ENCODE measurements at regions of chr20 and their contacts with region 1.

Region 1: GRCh38 chr20:49610701-49611538 is 43.0 kb upstream of the PTGIS start:
- DNase-seq: peak; percentile 92 to 98
- ATAC-seq: peak; percentile 87 to 92
- H3K4me3 ChIP-seq: peak overlapping the region; percentile 52
- H3K27ac ChIP-seq: peak overlapping the region; percentile 85 to 88
- H3K4me1 ChIP-seq: peaks cover 27% of the 10 kb centered on the region
- CTCF ChIP-seq: peak; percentile 97
- EP300 ChIP-seq: no peak
- POLR2A ChIP-seq: peak; percentile 54
- RAD21 ChIP-seq: peak; percentile 97 to 100

Region 2: DNA sequence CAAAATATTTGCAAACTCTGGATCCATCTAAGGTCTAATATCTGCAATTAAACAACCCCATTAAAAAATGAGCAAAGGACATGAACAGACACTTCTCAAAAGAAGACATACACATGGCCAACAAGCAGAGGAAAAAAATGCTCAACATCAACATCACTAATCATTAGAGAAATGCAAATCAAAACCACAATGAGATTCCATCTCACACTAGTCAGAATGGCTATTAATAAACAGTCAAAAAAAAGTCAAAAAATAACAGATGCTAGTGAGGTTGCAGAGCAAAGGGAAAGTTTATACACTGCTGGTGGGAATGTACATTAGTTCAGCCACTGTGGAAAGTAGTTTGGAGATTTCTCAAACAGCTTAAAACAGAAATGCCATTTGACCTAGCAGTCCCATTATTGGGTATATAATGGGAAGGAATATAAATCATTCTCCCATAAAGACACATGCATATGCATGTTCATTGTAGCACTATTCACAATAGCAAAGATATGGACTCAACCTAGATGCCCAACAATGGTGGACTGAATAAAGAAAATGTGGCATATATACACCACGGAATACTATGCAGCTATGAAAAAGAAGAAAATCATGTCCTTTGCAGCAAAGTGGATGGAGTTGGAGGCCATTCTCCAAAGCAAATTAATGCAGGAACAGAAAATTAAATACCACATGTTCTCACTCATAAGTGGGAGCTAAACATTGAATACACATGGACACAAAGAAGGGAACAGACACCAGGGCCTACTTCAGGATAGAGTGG is 342.1 kb before region 1 on chr20:
- CTCF ChIA-PET with region 1: no interaction called
- POLR2A ChIA-PET with region 1: no interaction called
- DNase-seq: no peak
- ATAC-seq: no peak
- H3K4me3 ChIP-seq: no peak overlapping the region
- H3K27ac ChIP-seq: no peak overlapping the region
- H3K4me1 ChIP-seq: no peaks in the 10 kb centered on the region
- CTCF ChIP-seq: no peak
- EP300 ChIP-seq: no peak
- POLR2A ChIP-seq: no peak
- RAD21 ChIP-seq: no peak

Region 3: GRCh38 chr20:49338061-49338460 is 272.9 kb before region 1 on chr20:
- CTCF ChIA-PET with region 1: interaction called, 26 read pairs
- POLR2A ChIA-PET with region 1: no interaction called
- DNase-seq: no peak
- ATAC-seq: no peak
- H3K4me3 ChIP-seq: no peak overlapping the region
- H3K27ac ChIP-seq: no peak overlapping the region
- H3K4me1 ChIP-seq: peaks cover 9% of the 10 kb centered on the region
- CTCF ChIP-seq: no peak
- EP300 ChIP-seq: no peak
- POLR2A ChIP-seq: no peak
- RAD21 ChIP-seq: no peak

Region 4: DNA sequence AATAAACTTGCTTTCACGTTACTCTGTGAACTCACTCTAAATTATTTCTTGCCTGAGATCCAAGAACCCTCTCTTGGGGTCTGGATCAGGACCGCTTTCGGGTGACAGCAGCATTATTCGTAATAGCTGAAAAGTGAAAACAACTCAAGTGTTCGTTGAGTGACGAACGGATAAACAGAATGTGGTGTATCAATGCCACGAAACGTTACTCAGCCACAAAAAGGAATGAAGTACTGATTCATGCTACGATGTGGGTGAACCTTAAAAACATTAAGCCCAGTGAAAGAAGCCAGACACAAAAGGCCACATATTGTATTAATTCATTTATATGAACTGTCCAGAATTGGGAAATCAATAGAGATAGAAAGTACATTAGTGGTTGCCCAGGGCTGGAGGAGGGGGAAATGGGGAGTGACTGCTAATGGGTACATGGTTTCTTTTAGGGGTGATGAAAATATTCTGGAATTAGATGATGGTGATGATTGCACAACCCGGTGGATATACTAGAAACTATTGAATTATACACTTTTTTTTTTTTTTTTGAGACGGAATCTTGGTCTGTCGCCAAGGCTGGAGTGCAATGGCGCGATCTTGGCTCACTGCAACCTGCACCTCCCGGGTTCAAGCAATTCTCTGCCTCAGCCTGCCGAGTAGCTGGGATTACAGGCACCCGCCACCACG is 51.4 kb before region 1 on chr20:
- CTCF ChIA-PET with region 1: interaction called, 19 read pairs
- POLR2A ChIA-PET with region 1: no interaction called
- DNase-seq: no peak
- ATAC-seq: no peak
- H3K4me3 ChIP-seq: no peak overlapping the region
- H3K27ac ChIP-seq: no peak overlapping the region
- H3K4me1 ChIP-seq: peaks cover 19% of the 10 kb centered on the region
- CTCF ChIP-seq: no peak
- EP300 ChIP-seq: no peak
- POLR2A ChIP-seq: no peak
- RAD21 ChIP-seq: no peak

Region 5: GRCh38 chr20:49594143-49594930 is 16.6 kb before region 1 on chr20:
- CTCF ChIA-PET with region 1: interaction called, 83 read pairs
- POLR2A ChIA-PET with region 1: no interaction called
- DNase-seq: no peak
- ATAC-seq: peak; percentile 30 to 58; a peak in 4 of 6 replicates
- H3K4me3 ChIP-seq: no peak overlapping the region
- H3K27ac ChIP-seq: peak overlapping the region; percentile 53 to 78
- H3K4me1 ChIP-seq: peaks cover 37% of the 10 kb centered on the region
- CTCF ChIP-seq: no peak
- EP300 ChIP-seq: no peak
- POLR2A ChIP-seq: no peak
- RAD21 ChIP-seq: no peak

Region 6: GRCh38 chr20:49676581-49677291 is 65.8 kb after region 1 on chr20:
- CTCF ChIA-PET with region 1: interaction called, 12 read pairs
- POLR2A ChIA-PET with region 1: no interaction called
- DNase-seq: peak; percentile 53 to 66
- ATAC-seq: peak in 1 of 2 experiments; percentile 12; a peak in 2 of 6 replicates
- H3K4me3 ChIP-seq: peak overlapping the region; percentile 13; the same call in 1 of the 3 replicates
- H3K27ac ChIP-seq: peak overlapping the region; percentile 96 to 97
- H3K4me1 ChIP-seq: peaks cover 97% of the 10 kb centered on the region
- CTCF ChIP-seq: no peak
- EP300 ChIP-seq: no peak
- POLR2A ChIP-seq: no peak
- RAD21 ChIP-seq: no peak

Region 7: GRCh38 chr20:49812463-49813304 is 201.8 kb after region 1 on chr20 and contains the start of gene SLC9A8:
- CTCF ChIA-PET with region 1: interaction called, 13 read pairs
- POLR2A ChIA-PET with region 1: interaction called, 3 read pairs
- DNase-seq: peak; percentile 83 to 90
- ATAC-seq: peak; percentile 93 to 94
- H3K4me3 ChIP-seq: peak within 1 kb of the TSS; percentile 86
- H3K27ac ChIP-seq: peak within 1 kb of the TSS; percentile 96 to 99
- H3K4me1 ChIP-seq: peaks cover 19% of the 10 kb centered on the region
- CTCF ChIP-seq: no peak
- EP300 ChIP-seq: no peak
- POLR2A ChIP-seq: peak; percentile 61
- RAD21 ChIP-seq: peak in 1 of 2 experiments; percentile 11; a peak in 2 of 5 replicates
- polyA plus RNA-seq, gene SLC9A8: 5.0 and 7.4 TPM in 2 replicates